Common myeloid progenitor, CD34-positive (primary cell): ENCODE measurements at regions of chr11 and their contacts with region 1.

Region 1: DNA sequence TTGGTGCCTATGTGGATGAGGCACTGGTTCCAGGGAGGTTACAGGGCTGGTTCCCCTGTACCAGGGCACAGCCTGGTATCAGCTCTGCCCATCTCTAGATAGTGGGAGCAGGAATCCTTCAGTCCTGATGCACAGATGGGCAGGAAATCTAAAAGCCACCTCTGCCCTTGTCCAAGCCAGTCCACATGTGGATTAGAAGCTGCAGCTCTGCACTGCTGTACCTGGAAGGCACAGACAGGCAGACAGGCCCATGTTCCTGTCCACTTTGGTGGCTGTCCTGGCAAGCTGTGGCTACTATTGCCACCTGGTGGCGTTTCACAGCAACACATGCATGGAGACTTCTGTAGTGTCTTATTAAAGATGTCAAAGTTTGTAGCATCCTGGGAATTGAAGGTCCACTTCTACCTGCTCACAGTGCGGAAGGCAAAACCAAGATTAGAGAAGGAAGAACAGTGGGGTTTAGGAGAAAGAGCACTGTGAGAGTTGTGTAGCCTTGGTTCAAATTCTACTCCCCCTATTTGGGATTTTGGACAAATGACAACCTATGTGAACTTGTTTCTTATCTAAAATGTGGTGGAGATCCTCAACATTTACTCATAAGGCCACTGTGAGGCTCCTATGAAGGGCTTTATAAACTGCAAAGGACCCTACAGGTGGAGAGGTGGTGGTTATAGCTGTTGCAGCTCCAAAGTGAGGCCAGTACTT is 30.1 kb downstream of the NAV2 start:
- DNase-seq: peak; percentile 65 to 84 (median 79)
- H3K4me3 ChIP-seq: no peak overlapping the region
- H3K27ac ChIP-seq: no peak overlapping the region
- H3K4me1 ChIP-seq: no peaks in the 10 kb centered on the region
- H3K27me3 ChIP-seq: peaks cover 0 to 2% (median 0%) of the 10 kb centered on the region in 5 experiments

Region 2: GRCh38 chr11:19561011-19561410 is 181.7 kb before region 1 on chr11:
- CTCF ChIA-PET with region 1: interaction called, 83 read pairs
- POLR2A ChIA-PET with region 1: no interaction called
- DNase-seq: no peak
- H3K4me3 ChIP-seq: no peak overlapping the region
- H3K27ac ChIP-seq: no peak overlapping the region
- H3K4me1 ChIP-seq: peaks cover 0 to 11% (median 3%) of the 10 kb centered on the region in 4 experiments
- H3K27me3 ChIP-seq: peaks cover 2 to 22% (median 9%) of the 10 kb centered on the region in 5 experiments

Region 3: DNA sequence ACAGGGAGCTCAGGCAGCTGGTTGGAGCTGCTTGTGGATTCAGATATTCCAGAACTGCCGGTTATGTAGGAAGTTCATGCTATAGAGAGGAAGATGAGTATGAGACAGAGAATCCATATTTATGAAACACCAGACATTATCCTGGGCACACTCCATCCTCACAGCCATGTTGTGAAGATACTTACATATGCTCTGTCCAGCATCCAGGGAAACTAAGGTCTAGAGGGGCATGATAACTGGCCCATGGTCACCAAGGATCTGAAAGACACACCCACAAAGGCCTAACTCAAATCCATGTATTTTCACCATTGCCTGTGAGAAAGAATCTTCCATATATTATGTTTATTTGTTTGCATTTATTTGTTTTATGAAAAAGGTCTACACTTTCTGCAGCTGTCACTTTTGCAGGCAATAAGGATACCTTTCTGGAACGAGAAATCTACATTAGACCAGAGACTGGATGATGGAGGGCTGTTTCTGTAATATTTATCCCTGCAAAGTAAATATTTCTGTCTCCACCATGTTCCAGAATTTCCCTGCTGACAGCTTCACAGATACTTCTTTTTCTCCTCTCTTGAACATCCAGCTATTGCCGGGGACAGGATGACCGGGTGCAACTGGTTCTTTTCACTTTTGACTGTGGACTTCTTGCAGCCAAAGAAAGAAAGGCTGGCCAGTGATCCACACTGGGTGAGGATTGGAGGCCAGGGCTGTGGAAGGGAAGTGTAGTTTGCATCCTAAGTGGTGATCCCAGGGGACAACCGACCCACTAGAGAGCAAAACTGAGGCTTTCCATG is 176.0 kb before region 1 on chr11:
- CTCF ChIA-PET with region 1: interaction called, 83 read pairs
- POLR2A ChIA-PET with region 1: no interaction called
- DNase-seq: no peak
- H3K4me3 ChIP-seq: no peak overlapping the region
- H3K27ac ChIP-seq: no peak overlapping the region
- H3K4me1 ChIP-seq: peaks cover 0 to 8% (median 2%) of the 10 kb centered on the region in 4 experiments
- H3K27me3 ChIP-seq: peaks cover 0 to 11% (median 2%) of the 10 kb centered on the region in 5 experiments

Region 4: GRCh38 chr11:19723572-19724342 is 19.0 kb before region 1 on chr11:
- CTCF ChIA-PET with region 1: interaction called, 14 read pairs
- POLR2A ChIA-PET with region 1: no interaction called
- DNase-seq: peak in 2 of 3 donors; percentile 60 to 77
- H3K4me3 ChIP-seq: no peak overlapping the region
- H3K27ac ChIP-seq: no peak overlapping the region
- H3K4me1 ChIP-seq: peaks cover 0 to 10% (median 6%) of the 10 kb centered on the region in 4 experiments
- H3K27me3 ChIP-seq: peaks cover 0 to 13% (median 0%) of the 10 kb centered on the region in 5 experiments

Region 5: DNA sequence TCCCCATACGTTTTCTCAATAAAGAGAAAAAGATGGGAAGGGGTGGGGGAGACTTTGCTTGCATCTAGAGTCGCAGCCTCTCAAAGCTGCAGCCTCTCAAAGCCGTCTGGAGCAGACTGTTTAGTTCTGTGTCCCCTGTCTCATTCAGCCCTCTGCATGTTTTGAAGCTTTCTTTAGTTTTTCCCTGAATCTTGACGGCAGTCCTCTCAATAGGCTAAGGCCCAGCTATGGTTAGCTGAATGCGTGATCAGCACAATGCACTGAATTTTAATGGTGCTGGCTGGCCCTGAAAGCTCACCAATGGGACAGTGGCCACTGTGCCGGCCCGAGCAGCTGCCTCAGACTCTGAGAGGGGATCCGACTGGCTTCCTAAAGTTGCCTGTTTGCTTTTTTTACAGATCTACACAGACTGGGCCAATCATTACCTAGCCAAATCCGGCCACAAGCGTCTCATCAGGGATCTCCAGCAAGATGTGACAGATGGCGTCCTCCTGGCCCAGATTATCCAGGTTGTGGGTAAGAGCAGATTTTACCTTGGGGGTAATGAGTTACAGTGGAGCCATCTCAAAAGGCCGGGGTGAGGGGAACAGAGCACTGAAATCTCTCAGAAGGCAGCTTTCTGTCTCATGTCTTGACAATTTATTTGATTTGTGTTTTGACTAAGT is 89.5 kb after region 1 on chr11:
- CTCF ChIA-PET with region 1: no interaction called
- POLR2A ChIA-PET with region 1: no interaction called
- DNase-seq: no peak
- H3K4me3 ChIP-seq: no peak overlapping the region
- H3K27ac ChIP-seq: no peak overlapping the region
- H3K4me1 ChIP-seq: no peaks in the 10 kb centered on the region
- H3K27me3 ChIP-seq: peaks cover 0 to 2% (median 0%) of the 10 kb centered on the region in 5 experiments